ENCODE measurements at regions of chr22 and their contacts with region 1.

Region 1: DNA sequence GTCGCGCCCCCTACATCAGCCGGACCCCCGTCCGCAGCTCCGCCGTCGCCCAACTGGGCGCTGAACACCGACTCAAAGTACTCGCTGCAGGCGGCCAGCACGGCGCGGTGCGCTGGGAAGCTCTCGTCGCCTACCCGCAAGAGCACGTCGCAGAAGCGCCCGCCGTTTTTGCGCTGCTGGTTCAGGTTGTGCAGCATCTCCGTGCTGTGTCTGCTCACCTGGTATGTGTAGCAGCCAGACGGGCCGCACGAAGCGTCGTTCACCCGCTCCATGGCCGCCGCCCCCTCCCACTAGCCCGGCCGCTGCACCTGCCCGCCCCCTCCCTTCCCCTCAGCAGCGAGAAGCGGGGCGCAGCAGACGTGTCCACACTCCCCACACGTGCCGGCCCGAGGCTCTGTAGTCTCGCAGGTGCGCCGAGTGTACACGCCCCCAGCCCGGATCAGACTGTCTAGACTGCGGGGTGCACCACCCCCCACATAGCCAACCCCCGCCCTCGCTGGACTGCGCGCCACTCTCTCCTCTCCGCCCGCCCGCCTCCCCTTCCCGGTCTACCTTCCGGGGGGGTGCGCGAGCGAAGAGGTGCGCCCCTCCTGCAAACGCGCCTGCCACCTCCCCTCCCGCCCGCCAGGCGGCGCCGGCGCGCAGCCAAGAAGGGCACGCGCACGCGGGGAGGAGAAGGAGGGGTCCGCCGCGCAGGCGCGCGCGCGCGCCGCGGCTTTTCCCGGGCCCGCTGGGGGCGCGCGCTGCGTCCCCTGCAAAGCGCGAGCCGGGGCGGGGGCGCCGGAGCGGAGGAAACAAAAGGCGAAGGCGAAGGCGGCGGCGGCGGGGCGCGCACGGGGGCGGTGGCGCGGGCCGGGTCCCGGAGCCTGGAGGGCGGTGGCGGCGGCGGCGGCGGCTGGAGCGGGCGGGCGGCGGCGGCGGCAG is 553 bp downstream of the PATZ1 start:
- DNase-seq: peak; percentile 91 to 95 (median 93)
- ATAC-seq: peak; percentile 83
- H3K4me3 ChIP-seq: peak overlapping the region; percentile 60
- H3K4me3 Mint-ChIP-seq: peak overlapping the region; percentile 85 to 91 (median 88)
- H3K27ac ChIP-seq: peak overlapping the region; percentile 74
- H3K27ac Mint-ChIP-seq: peak overlapping the region; percentile 81 to 97 (median 92)
- H3K4me1 ChIP-seq: peaks cover 26 to 42% of the 10 kb centered on the region in 2 donors
- H3K4me1 Mint-ChIP-seq: peaks cover 32 to 57% (median 48%) of the 10 kb centered on the region in 7 donors
- H3K27me3 ChIP-seq: no peaks in the 10 kb centered on the region
- H3K27me3 Mint-ChIP-seq: peaks cover 0 to 4% (median 0%) of the 10 kb centered on the region in 5 donors

Region 2: DNA sequence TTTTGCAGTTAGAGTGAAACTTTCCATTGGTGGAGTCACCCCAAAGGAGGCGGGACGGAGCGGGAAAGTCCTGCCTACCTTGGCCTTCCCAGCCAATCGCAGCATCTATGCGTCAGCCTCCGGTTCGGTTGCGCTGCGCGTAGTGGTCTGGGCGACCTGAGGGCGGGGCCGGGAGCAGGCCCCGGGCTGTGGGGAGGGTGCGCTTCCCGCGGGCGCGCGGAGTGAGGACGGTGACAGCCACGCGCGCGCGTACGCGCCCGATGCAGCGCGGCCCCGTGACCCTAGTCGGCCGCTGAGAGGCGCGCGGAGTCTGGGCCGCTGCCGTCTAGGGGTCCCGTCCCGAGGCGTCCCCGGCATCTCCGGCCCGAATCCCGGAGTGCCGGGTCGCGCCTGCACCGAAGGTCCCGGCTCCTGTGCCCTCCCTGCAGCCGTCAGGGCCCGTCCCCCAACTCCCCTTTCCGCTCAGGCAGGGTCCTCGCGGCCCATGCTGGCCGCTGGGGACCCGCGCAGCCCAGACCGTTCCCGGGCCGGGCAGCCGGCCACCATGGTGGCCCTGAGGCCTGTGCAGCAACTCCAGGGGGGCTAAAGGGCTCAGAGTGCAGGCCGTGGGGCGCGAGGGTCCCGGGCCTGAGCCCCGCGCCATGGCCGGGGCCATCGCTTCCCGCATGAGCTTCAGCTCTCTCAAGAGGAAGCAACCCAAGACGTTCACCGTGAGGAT is 1742.1 kb before region 1 on chr22 and contains the start of gene NF2:
- CTCF ChIA-PET with region 1: no interaction called
- POLR2A ChIA-PET with region 1: no interaction called
- intact Hi-C with region 1: loop called in 1 of 2 experiments (anchors 10 kb)
- DNase-seq: peak; percentile 96 to 99 (median 98)
- ATAC-seq: peak; percentile 98
- H3K4me3 ChIP-seq: peak within 1 kb of the TSS; percentile 92
- H3K4me3 Mint-ChIP-seq: peak within 1 kb of the TSS; percentile 85 to 98 (median 96)
- H3K27ac ChIP-seq: peak within 1 kb of the TSS; percentile 91
- H3K27ac Mint-ChIP-seq: peak within 1 kb of the TSS; percentile 91 to 99 (median 98)
- H3K4me1 ChIP-seq: peaks cover 11 to 16% of the 10 kb centered on the region in 2 donors
- H3K4me1 Mint-ChIP-seq: peaks cover 13 to 40% (median 28%) of the 10 kb centered on the region in 7 donors
- H3K27me3 ChIP-seq: no peaks in the 10 kb centered on the region
- H3K27me3 Mint-ChIP-seq: no peaks in the 10 kb centered on the region
- total RNA-seq, gene NF2: 27.6 to 56.3 (median 28.3) TPM

Region 3: GRCh38 chr22:31211862-31212730 is 133.5 kb before region 1 on chr22 and contains the start of gene LIMK2:
- CTCF ChIA-PET with region 1: interaction called, 4 read pairs
- POLR2A ChIA-PET with region 1: interaction called, 5 read pairs
- intact Hi-C with region 1: loop called in 1 of 2 experiments (anchors 1 kb)
- DNase-seq: peak; percentile 90 to 99 (median 95)
- ATAC-seq: peak; percentile 100
- H3K4me3 ChIP-seq: peak within 1 kb of the TSS; percentile 83
- H3K4me3 Mint-ChIP-seq: peak within 1 kb of the TSS; percentile 86 to 91 (median 88)
- H3K27ac ChIP-seq: peak within 1 kb of the TSS; percentile 82
- H3K27ac Mint-ChIP-seq: peak within 1 kb of the TSS; percentile 82 to 96 (median 89)
- H3K4me1 ChIP-seq: peaks cover 23 to 31% of the 10 kb centered on the region in 2 donors
- H3K4me1 Mint-ChIP-seq: peaks cover 38 to 72% (median 51%) of the 10 kb centered on the region in 7 donors
- H3K27me3 ChIP-seq: no peaks in the 10 kb centered on the region
- H3K27me3 Mint-ChIP-seq: no peaks in the 10 kb centered on the region
- total RNA-seq, gene LIMK2: 18.3 to 49.9 (median 28.8) TPM

Region 4: DNA sequence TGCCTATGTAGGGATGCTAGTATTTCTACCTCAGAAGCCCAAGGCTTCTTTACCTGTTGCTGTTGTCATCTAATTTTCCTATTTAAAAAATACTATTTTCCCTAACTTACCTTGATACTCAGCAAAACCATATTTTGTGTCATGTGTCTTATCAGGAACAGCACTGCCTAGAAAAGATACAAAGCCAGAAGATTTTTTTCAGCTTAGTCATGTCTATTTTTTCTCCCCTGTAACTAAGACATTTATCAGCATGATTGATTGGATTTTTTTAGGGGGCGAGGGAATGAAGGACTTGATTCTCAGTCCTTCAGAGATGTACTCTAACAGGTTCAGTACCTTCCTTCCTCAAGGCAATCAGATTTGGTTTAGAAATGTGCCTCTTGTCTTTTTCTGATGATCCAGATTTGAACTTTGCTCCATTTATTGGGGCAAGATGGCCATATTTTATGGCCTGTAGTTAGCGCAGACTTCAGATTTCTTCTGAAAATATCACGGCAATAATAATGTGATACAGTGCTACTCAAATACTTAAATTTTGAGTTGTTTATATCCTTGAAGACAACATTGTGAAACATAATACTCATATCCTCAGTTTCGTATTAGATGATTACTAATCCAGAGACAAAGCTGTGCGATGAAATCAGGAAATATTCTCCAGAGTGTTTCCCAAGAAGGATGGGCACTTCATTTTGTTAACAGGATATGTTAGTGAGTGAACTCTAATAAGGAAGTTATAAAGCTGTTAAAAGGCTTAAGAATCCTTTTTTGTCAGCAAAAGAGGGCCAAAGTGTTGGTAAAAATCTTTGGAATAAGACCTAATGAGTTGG is 49.5 kb before region 1 on chr22:
- CTCF ChIA-PET with region 1: interaction called, 5 read pairs
- POLR2A ChIA-PET with region 1: interaction called, 109 read pairs
- intact Hi-C with region 1: loop called in 1 of 2 experiments (anchors 1 kb)
- DNase-seq: no peak
- ATAC-seq: no peak
- H3K4me3 ChIP-seq: peak overlapping the region; percentile 5
- H3K4me3 Mint-ChIP-seq: peak overlapping the region; percentile 63 to 98 (median 81)
- H3K27ac ChIP-seq: peak overlapping the region; percentile 60
- H3K27ac Mint-ChIP-seq: peak overlapping the region in 8 of 9 donors; percentile 79 to 99 (median 88)
- H3K4me1 ChIP-seq: peaks cover 20 to 41% of the 10 kb centered on the region in 2 donors
- H3K4me1 Mint-ChIP-seq: peaks cover 25 to 75% (median 62%) of the 10 kb centered on the region in 7 donors
- H3K27me3 ChIP-seq: no peaks in the 10 kb centered on the region
- H3K27me3 Mint-ChIP-seq: peaks cover 0 to 3% (median 0%) of the 10 kb centered on the region in 5 donors

Region 5: GRCh38 chr22:31489604-31490495 is 144.3 kb after region 1 on chr22 and contains the start of gene EIF4ENIF1:
- CTCF ChIA-PET with region 1: no interaction called
- POLR2A ChIA-PET with region 1: interaction called, 5 read pairs
- intact Hi-C with region 1: loop called (anchors 1 to 2 kb)
- DNase-seq: peak; percentile 81 to 91 (median 87)
- ATAC-seq: peak; percentile 89
- H3K4me3 ChIP-seq: peak within 1 kb of the TSS; percentile 66
- H3K4me3 Mint-ChIP-seq: peak within 1 kb of the TSS; percentile 87 to 98 (median 94)
- H3K27ac ChIP-seq: peak within 1 kb of the TSS; percentile 92
- H3K27ac Mint-ChIP-seq: peak within 1 kb of the TSS; percentile 93 to 99 (median 96)
- H3K4me1 ChIP-seq: peaks cover 19 to 25% of the 10 kb centered on the region in 2 donors
- H3K4me1 Mint-ChIP-seq: peaks cover 7 to 54% (median 47%) of the 10 kb centered on the region in 7 donors
- H3K27me3 ChIP-seq: no peaks in the 10 kb centered on the region
- H3K27me3 Mint-ChIP-seq: no peaks in the 10 kb centered on the region
- total RNA-seq, gene EIF4ENIF1: 26.3 to 46.5 (median 36.8) TPM

Region 6: GRCh38 chr22:31630331-31631329 is 285.0 kb after region 1 on chr22:
- CTCF ChIA-PET with region 1: no interaction called
- POLR2A ChIA-PET with region 1: interaction called, 4 read pairs
- intact Hi-C with region 1: loop called (anchors 1 kb)
- DNase-seq: peak; percentile 71 to 90 (median 89)
- ATAC-seq: peak; percentile 92
- H3K4me3 ChIP-seq: peak overlapping the region; percentile 74
- H3K4me3 Mint-ChIP-seq: peak overlapping the region; percentile 80 to 92 (median 88)
- H3K27ac ChIP-seq: peak overlapping the region; percentile 95
- H3K27ac Mint-ChIP-seq: peak overlapping the region; percentile 89 to 96 (median 93)
- H3K4me1 ChIP-seq: peaks cover 16 to 19% of the 10 kb centered on the region in 2 donors
- H3K4me1 Mint-ChIP-seq: peaks cover 18 to 58% (median 38%) of the 10 kb centered on the region in 7 donors
- H3K27me3 ChIP-seq: no peaks in the 10 kb centered on the region
- H3K27me3 Mint-ChIP-seq: no peaks in the 10 kb centered on the region

Region 7: GRCh38 chr22:31943976-31944699 is 598.5 kb after region 1 on chr22 and contains the start of gene YWHAH:
- CTCF ChIA-PET with region 1: no interaction called
- POLR2A ChIA-PET with region 1: no interaction called
- intact Hi-C with region 1: loop called in 1 of 2 experiments (anchors 5 kb)
- DNase-seq: peak; percentile 69 to 96 (median 79)
- ATAC-seq: peak; percentile 82
- H3K4me3 ChIP-seq: peak within 1 kb of the TSS; percentile 87
- H3K4me3 Mint-ChIP-seq: peak within 1 kb of the TSS in 6 of 10 donors; percentile 89 to 94 (median 92)
- H3K27ac ChIP-seq: peak within 1 kb of the TSS; percentile 76
- H3K27ac Mint-ChIP-seq: peak within 1 kb of the TSS in 8 of 9 donors; percentile 74 to 95 (median 85)
- H3K4me1 ChIP-seq: peaks cover 18 to 21% of the 10 kb centered on the region in 2 donors
- H3K4me1 Mint-ChIP-seq: peaks cover 7 to 30% (median 14%) of the 10 kb centered on the region in 7 donors
- H3K27me3 ChIP-seq: no peaks in the 10 kb centered on the region
- H3K27me3 Mint-ChIP-seq: no peaks in the 10 kb centered on the region
- total RNA-seq, gene YWHAH: 11.7 to 130 (median 17.1) TPM

Measured in naive thymus-derived CD4-positive, alpha-beta T cell (primary cell).